ENCODE measurements at regions of chr13 and their contacts with region 1.

Region 1: GRCh38 chr13:21583478-21583877 is 20.5 kb downstream of the MICU2 start:
- DNase-seq: no peak
- H3K4me3 ChIP-seq: no peak overlapping the region
- H3K27ac ChIP-seq: no peak overlapping the region
- H3K27me3 ChIP-seq: no peaks in the 10 kb centered on the region
- CTCF ChIP-seq: no peak

Region 2: DNA sequence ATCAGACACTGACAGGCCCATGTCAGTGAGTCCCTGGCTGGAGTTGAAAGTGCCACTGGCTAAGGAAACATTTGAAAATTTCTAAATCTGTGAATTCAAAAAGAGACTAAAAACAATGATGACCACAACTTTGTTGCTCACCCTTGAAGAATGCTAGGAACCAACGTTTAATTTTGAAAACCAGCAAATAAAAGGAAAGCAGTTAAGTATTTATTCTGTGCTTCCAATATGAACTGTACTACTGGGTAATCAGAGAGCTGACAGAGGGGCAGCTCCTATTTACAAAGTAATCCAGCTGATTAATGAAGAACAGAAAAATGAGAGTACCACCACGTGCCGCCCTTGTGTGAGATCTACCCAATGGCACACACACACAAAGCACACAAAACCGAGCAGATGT is 477.4 kb before region 1 on chr13:
- CTCF ChIA-PET with region 1: no interaction called
- POLR2A ChIA-PET with region 1: no interaction called
- DNase-seq: peak; percentile 32
- H3K4me3 ChIP-seq: no peak overlapping the region
- H3K27ac ChIP-seq: peak overlapping the region; percentile 76
- H3K27me3 ChIP-seq: no peaks in the 10 kb centered on the region
- CTCF ChIP-seq: no peak

Region 3: DNA sequence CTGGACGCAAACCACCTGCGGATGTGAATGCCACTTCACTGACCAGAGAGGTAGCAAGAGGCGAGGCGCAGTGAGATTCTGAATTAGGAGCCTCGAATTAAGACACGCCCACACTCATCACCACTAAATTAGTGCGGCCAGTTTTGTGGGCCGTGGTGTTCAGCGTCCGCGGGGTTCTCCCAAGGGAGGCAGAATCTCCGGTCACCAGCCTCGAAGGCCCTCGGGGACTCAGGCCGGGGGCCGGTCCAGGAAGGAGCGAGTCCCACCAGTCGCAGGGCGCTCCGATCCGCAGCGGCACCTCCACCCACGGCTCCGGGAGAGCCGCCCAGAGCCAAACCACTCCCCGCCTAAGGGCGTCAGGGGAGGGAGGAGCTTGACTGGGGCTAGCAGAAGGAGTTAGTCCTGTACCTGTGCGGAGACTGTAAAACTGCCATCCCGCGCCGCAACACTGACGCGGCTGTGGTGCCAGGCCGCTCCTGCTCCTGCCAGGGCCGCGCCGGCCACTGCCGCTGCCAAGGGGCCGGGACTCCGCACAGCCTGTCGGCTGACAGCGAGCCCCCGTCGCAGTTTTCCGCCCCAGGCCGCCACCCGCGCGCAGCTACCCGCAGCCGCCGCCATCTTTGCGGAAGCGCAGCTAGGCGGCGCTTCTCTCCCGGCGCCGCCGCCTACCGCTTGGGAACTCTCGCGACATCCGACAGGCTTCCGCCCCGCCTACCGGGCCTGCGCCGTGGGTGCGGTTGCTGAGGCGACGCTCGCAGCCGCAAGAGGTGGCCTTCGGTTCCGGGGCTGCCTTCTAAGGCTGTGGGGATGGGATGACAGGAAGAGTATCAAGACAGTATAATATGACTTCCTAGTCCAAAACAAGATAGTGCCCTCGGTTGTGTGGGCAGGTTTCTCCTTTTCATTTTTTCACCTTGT is 20.3 kb after region 1 on chr13 and contains the start of gene MICU2:
- CTCF ChIA-PET with region 1: no interaction called
- POLR2A ChIA-PET with region 1: interaction called, 11 read pairs
- DNase-seq: peak; percentile 81
- H3K4me3 ChIP-seq: peak within 1 kb of the TSS; percentile 84
- H3K27ac ChIP-seq: peak within 1 kb of the TSS; percentile 81
- H3K27me3 ChIP-seq: no peaks in the 10 kb centered on the region
- CTCF ChIP-seq: no peak
- polyA plus RNA-seq, gene MICU2: 33.3 and 42.1 TPM in 2 replicates

Region 4: DNA sequence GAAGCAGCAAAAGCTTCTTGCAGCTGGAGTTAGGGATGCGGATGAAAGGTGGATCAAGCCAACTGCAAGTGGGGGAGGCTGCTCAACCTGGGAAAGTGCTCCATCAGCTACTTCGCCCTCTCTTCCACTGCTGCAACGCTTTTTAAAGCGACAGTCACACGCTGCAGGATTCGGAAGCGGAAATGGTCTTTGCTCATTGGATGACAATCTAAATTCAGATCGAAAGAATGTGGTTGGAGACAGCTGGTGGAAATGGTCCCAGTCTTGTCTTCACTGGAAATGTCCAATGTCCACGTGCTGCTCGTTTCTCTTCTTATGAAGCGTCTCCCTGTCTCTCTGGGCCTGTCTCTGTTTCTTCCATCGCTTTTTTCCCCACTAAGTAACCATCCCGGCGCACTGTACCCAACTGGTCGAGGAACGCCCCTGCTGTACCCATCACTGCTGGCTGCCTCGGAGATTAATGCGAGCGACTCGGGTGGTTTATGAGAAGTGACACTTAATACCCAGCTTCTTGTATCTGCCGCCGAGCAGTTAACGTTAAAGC is 85.3 kb after region 1 on chr13:
- CTCF ChIA-PET with region 1: no interaction called
- POLR2A ChIA-PET with region 1: no interaction called
- DNase-seq: no peak
- H3K4me3 ChIP-seq: peak overlapping the region; percentile 61
- H3K27ac ChIP-seq: no peak overlapping the region
- H3K27me3 ChIP-seq: peaks cover 34% of the 10 kb centered on the region
- CTCF ChIP-seq: no peak

Region 5: GRCh38 chr13:21686751-21687391 is 103.4 kb after region 1 on chr13:
- CTCF ChIA-PET with region 1: no interaction called
- POLR2A ChIA-PET with region 1: no interaction called
- DNase-seq: no peak
- H3K4me3 ChIP-seq: no peak overlapping the region
- H3K27ac ChIP-seq: no peak overlapping the region
- H3K27me3 ChIP-seq: peaks cover 10% of the 10 kb centered on the region
- CTCF ChIP-seq: no peak

Region 6: GRCh38 chr13:21901801-21902708 is 318.6 kb after region 1 on chr13:
- CTCF ChIA-PET with region 1: no interaction called
- POLR2A ChIA-PET with region 1: no interaction called
- DNase-seq: no peak
- H3K4me3 ChIP-seq: no peak overlapping the region
- H3K27ac ChIP-seq: no peak overlapping the region
- H3K27me3 ChIP-seq: no peaks in the 10 kb centered on the region
- CTCF ChIP-seq: no peak